ENCODE measurements at regions of chr14 and their contacts with region 1.

Region 1: GRCh38 chr14:71618047-71618446 is 314.2 kb upstream of the RGS6 start:
- DNase-seq: no peak
- H3K4me3 ChIP-seq: no peak overlapping the region
- H3K27ac ChIP-seq: no peak overlapping the region
- H3K4me1 ChIP-seq: no peaks in the 10 kb centered on the region
- H3K27me3 ChIP-seq: no peaks in the 10 kb centered on the region
- CTCF ChIP-seq: no peak
- EP300 ChIP-seq: no peak
- POLR2A ChIP-seq: no peak

Region 2: GRCh38 chr14:71555654-71556559 is 62.1 kb before region 1 on chr14:
- in situ Hi-C with region 1: no loop called
- intact Hi-C with region 1: loop called (anchors 5 kb)
- DNase-seq: peak; percentile 39
- H3K4me3 ChIP-seq: peak overlapping the region in 1 of 4 donors; percentile 27
- H3K27ac ChIP-seq: peak overlapping the region; percentile 47 to 78 (median 74)
- H3K4me1 ChIP-seq: peaks cover 13 to 41% (median 30%) of the 10 kb centered on the region in 4 donors
- H3K27me3 ChIP-seq: no peaks in the 10 kb centered on the region
- CTCF ChIP-seq: no peak
- EP300 ChIP-seq: no peak
- POLR2A ChIP-seq: no peak

Region 3: GRCh38 chr14:71586131-71586897 is 31.7 kb before region 1 on chr14:
- in situ Hi-C with region 1: no loop called
- intact Hi-C with region 1: no loop called
- DNase-seq: no peak
- H3K4me3 ChIP-seq: peak overlapping the region in 2 of 4 donors; percentile 13 to 22
- H3K27ac ChIP-seq: peak overlapping the region in 3 of 4 donors; percentile 4 to 44 (median 32)
- H3K4me1 ChIP-seq: peaks cover 0 to 14% (median 10%) of the 10 kb centered on the region in 4 donors
- H3K27me3 ChIP-seq: no peaks in the 10 kb centered on the region
- CTCF ChIP-seq: no peak
- EP300 ChIP-seq: no peak
- POLR2A ChIP-seq: no peak

Measured in transverse colon (tissue), 4 donors.